ENCODE measurements at regions of chr4 and their contacts with region 1.

Region 1: DNA sequence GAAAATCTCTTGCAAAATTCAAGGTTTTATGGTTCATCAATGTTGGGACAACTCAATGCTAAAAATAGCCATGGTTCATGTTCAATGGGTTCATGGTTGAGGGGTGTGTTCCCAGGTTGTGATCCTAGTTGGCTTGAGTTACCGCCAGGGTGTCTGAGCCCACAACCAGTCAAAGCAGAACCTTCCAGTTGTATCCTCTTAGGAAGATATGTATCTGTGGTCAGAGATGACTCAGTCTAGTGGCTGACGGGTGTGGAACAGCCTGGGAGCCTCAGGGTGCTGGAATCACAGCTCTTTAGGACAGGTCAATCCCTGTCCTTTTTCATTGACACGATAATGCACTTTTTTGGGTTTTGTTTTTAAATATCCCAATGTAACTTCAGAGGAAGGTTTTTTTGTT is 192.3 kb upstream of the NR3C2 start:
- DNase-seq: peak in 1 of 2 experiments; percentile 43
- H3K4me3 ChIP-seq: no peak overlapping the region
- H3K27ac ChIP-seq: no peak overlapping the region
- H3K4me1 ChIP-seq: no peaks in the 10 kb centered on the region
- H3K27me3 ChIP-seq: no peaks in the 10 kb centered on the region
- CTCF ChIP-seq: no peak

Region 2: GRCh38 chr4:148557793-148558192 is 76.7 kb before region 1 on chr4:
- CTCF ChIA-PET with region 1: no interaction called
- POLR2A ChIA-PET with region 1: no interaction called
- intact Hi-C with region 1: no loop called
- DNase-seq: no peak
- H3K4me3 ChIP-seq: no peak overlapping the region
- H3K27ac ChIP-seq: no peak overlapping the region
- H3K4me1 ChIP-seq: no peaks in the 10 kb centered on the region
- H3K27me3 ChIP-seq: no peaks in the 10 kb centered on the region
- CTCF ChIP-seq: no peak

Region 3: GRCh38 chr4:148608968-148609367 is 25.5 kb before region 1 on chr4:
- CTCF ChIA-PET with region 1: no interaction called
- POLR2A ChIA-PET with region 1: no interaction called
- intact Hi-C with region 1: no loop called
- DNase-seq: no peak
- H3K4me3 ChIP-seq: no peak overlapping the region
- H3K27ac ChIP-seq: no peak overlapping the region
- H3K4me1 ChIP-seq: no peaks in the 10 kb centered on the region
- H3K27me3 ChIP-seq: no peaks in the 10 kb centered on the region
- CTCF ChIP-seq: no peak

Region 4: GRCh38 chr4:148787831-148788477 is 153.5 kb after region 1 on chr4:
- CTCF ChIA-PET with region 1: no interaction called
- POLR2A ChIA-PET with region 1: no interaction called
- intact Hi-C with region 1: loop called (anchors 10 kb)
- DNase-seq: peak; percentile 34 to 44
- H3K4me3 ChIP-seq: no peak overlapping the region
- H3K27ac ChIP-seq: peak overlapping the region; percentile 25
- H3K4me1 ChIP-seq: peaks cover 27% of the 10 kb centered on the region
- H3K27me3 ChIP-seq: no peaks in the 10 kb centered on the region
- CTCF ChIP-seq: no peak

Measured in PC-9 (cell line).